Mammary epithelial cell (primary cell): ENCODE measurements at regions of chr12 and their contacts with region 1.

Region 1: DNA sequence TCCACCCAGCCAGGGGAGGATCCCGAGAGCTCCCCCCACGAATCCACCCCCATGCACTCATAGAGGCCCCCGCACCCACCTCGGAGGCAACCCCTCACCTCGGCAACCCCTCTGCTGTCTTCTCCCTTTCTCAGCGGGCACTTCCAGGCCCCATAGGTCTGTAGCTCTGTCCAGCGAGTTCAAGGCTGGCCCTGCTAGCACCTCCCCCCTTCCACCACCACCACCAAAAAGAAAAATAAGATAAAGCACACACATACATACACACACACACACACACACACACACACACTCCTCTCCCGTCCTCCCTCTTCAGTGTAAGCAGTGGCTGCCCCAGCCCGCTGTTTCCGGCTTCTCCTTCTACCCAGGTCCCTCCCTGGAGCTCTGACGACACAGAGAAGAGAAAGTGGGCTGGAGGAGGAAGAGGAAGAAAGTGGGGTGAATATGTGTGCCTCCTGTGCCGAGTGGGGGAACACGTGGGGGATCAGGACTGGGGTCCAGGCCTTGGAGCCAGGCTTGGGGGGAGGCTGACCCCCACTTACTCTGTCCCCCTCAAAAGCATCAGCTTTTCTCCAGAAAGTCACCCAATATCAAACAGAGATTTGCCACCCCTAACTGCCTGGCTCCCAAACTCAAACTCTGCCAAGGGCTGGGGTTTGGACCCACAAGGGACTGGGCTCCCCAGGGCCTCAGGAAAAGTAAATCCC is at the start of gene STAT6:
- DNase-seq: peak; percentile 82
- H3K4me3 ChIP-seq: peak within 1 kb of the TSS; percentile 62 to 68 (median 67)
- H3K27ac ChIP-seq: peak within 1 kb of the TSS; percentile 95
- H3K4me1 ChIP-seq: peaks cover 31% of the 10 kb centered on the region
- H3K27me3 ChIP-seq: no peaks in the 10 kb centered on the region
- CTCF ChIP-seq: no peak
- total RNA-seq, gene STAT6: 65.3 to 150 TPM

Region 2: GRCh38 chr12:56709759-56710376 is 401.3 kb before region 1 on chr12:
- CTCF ChIA-PET with region 1: no interaction called
- dilution Hi-C with region 1: no loop called
- in situ Hi-C with region 1: no loop called
- intact Hi-C with region 1: no loop called
- DNase-seq: no peak
- H3K4me3 ChIP-seq: no peak overlapping the region
- H3K27ac ChIP-seq: no peak overlapping the region
- H3K4me1 ChIP-seq: no peaks in the 10 kb centered on the region
- H3K27me3 ChIP-seq: no peaks in the 10 kb centered on the region
- CTCF ChIP-seq: no peak

Region 3: GRCh38 chr12:57019983-57020719 is 91.0 kb before region 1 on chr12:
- CTCF ChIA-PET with region 1: no interaction called
- dilution Hi-C with region 1: no loop called
- in situ Hi-C with region 1: no loop called
- intact Hi-C with region 1: no loop called
- DNase-seq: peak; percentile 11
- H3K4me3 ChIP-seq: no peak overlapping the region
- H3K27ac ChIP-seq: no peak overlapping the region
- H3K4me1 ChIP-seq: no peaks in the 10 kb centered on the region
- H3K27me3 ChIP-seq: no peaks in the 10 kb centered on the region
- CTCF ChIP-seq: no peak

Region 4: DNA sequence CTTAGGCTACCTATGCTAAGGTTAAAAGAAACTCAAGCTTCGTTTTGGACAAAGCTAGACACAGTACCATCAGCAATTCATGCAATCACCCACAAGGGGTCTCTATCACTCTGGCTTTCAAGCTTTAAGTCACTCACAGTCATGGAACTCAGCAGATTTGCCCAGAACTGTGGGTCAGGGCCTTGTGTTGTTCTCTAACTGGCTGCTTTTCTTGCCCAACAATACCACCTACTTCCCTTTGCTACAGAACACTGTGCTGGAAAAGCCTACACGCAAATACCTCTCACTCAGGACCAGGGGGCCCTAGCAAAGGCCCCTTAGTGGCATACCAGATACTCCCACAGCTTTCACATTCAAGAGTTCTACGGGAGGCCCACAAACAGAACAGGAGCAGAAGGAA is 41.7 kb before region 1 on chr12:
- CTCF ChIA-PET with region 1: interaction called, 12 read pairs
- dilution Hi-C with region 1: no loop called
- in situ Hi-C with region 1: loop called (anchors 5 kb)
- intact Hi-C with region 1: loop called (anchors 1 kb)
- DNase-seq: peak; percentile 63
- H3K4me3 ChIP-seq: no peak overlapping the region
- H3K27ac ChIP-seq: no peak overlapping the region
- H3K4me1 ChIP-seq: peaks cover 9% of the 10 kb centered on the region
- H3K27me3 ChIP-seq: no peaks in the 10 kb centered on the region
- CTCF ChIP-seq: peak; percentile 83 to 90

Region 5: GRCh38 chr12:57096099-57096572 is 15.0 kb before region 1 on chr12:
- CTCF ChIA-PET with region 1: interaction called, 20 read pairs
- dilution Hi-C with region 1: no loop called
- in situ Hi-C with region 1: no loop called
- intact Hi-C with region 1: loop called (anchors 1 kb)
- DNase-seq: peak; percentile 98
- H3K4me3 ChIP-seq: no peak overlapping the region
- H3K27ac ChIP-seq: peak overlapping the region; percentile 80
- H3K4me1 ChIP-seq: peaks cover 57% of the 10 kb centered on the region
- H3K27me3 ChIP-seq: no peaks in the 10 kb centered on the region
- CTCF ChIP-seq: no peak

Region 6: GRCh38 chr12:57182921-57183790 is 72.0 kb after region 1 on chr12:
- CTCF ChIA-PET with region 1: no interaction called
- dilution Hi-C with region 1: no loop called
- in situ Hi-C with region 1: loop called in 1 of 2 experiments (anchors 5 kb)
- intact Hi-C with region 1: loop called (anchors 1 kb)
- DNase-seq: peak; percentile 79
- H3K4me3 ChIP-seq: no peak overlapping the region
- H3K27ac ChIP-seq: no peak overlapping the region
- H3K4me1 ChIP-seq: peaks cover 22% of the 10 kb centered on the region
- H3K27me3 ChIP-seq: no peaks in the 10 kb centered on the region
- CTCF ChIP-seq: peak; percentile 91 to 96

Region 7: GRCh38 chr12:57280211-57281062 is 169.3 kb after region 1 on chr12:
- CTCF ChIA-PET with region 1: no interaction called
- dilution Hi-C with region 1: no loop called
- in situ Hi-C with region 1: no loop called
- intact Hi-C with region 1: no loop called
- DNase-seq: peak; percentile 89
- H3K4me3 ChIP-seq: peak overlapping the region in 1 of 3 experiments; percentile 7
- H3K27ac ChIP-seq: peak overlapping the region; percentile 41
- H3K4me1 ChIP-seq: peaks cover 15% of the 10 kb centered on the region
- H3K27me3 ChIP-seq: no peaks in the 10 kb centered on the region
- CTCF ChIP-seq: no peak